BJ (cell line): ENCODE measurements at regions of chr10 and their contacts with region 1.

Region 1: GRCh38 chr10:23994479-23995046 is 214.4 kb upstream of the KIAA1217 start:
- DNase-seq: no peak
- H3K4me3 ChIP-seq: no peak overlapping the region
- H3K27me3 ChIP-seq: no peaks in the 10 kb centered on the region; the same call in 1 of the 2 replicates
- CTCF ChIP-seq: peak; percentile 85

Region 2: GRCh38 chr10:23965880-23966279 is 28.7 kb before region 1 on chr10:
- CTCF ChIA-PET with region 1: no interaction called
- POLR2A ChIA-PET with region 1: no interaction called
- DNase-seq: no peak
- H3K4me3 ChIP-seq: no peak overlapping the region
- H3K27me3 ChIP-seq: no peaks in the 10 kb centered on the region
- CTCF ChIP-seq: no peak

Region 3: DNA sequence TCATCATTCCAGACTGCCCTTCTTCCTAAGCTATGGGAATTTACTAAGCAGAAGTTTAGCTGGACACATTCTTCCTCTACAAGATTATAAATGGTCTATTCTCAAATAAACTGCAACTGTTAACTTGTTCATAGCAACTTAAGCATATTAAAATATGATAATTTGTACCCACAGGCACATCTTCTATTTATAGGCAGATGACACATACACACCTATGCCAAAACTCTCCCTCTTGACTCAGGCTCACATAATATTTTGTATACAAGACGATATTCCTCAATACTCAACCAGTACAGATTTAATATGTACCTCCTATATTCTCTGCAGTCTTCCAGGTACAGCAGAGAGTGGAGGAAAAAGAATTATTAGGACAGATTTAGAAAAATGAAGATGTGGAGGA is 18.3 kb before region 1 on chr10:
- CTCF ChIA-PET with region 1: interaction called, 15 read pairs
- POLR2A ChIA-PET with region 1: no interaction called
- DNase-seq: no peak
- H3K4me3 ChIP-seq: no peak overlapping the region
- H3K27me3 ChIP-seq: no peaks in the 10 kb centered on the region
- CTCF ChIP-seq: no peak

Region 4: GRCh38 chr10:24008164-24009091 is 13.9 kb after region 1 on chr10:
- CTCF ChIA-PET with region 1: interaction called, 15 read pairs
- POLR2A ChIA-PET with region 1: no interaction called
- DNase-seq: peak; percentile 7
- H3K4me3 ChIP-seq: no peak overlapping the region
- H3K27me3 ChIP-seq: no peaks in the 10 kb centered on the region
- CTCF ChIP-seq: no peak

Region 5: GRCh38 chr10:24360282-24361127 is 365.9 kb after region 1 on chr10:
- CTCF ChIA-PET with region 1: interaction called, 25 read pairs
- POLR2A ChIA-PET with region 1: no interaction called
- DNase-seq: no peak
- H3K4me3 ChIP-seq: no peak overlapping the region
- H3K27me3 ChIP-seq: no peaks in the 10 kb centered on the region
- CTCF ChIP-seq: peak; percentile 83

Region 6: GRCh38 chr10:24513155-24513554 is 518.6 kb after region 1 on chr10:
- CTCF ChIA-PET with region 1: interaction called, 82 read pairs
- POLR2A ChIA-PET with region 1: no interaction called
- DNase-seq: no peak
- H3K4me3 ChIP-seq: no peak overlapping the region
- H3K27me3 ChIP-seq: no peaks in the 10 kb centered on the region
- CTCF ChIP-seq: peak; percentile 56

Region 7: DNA sequence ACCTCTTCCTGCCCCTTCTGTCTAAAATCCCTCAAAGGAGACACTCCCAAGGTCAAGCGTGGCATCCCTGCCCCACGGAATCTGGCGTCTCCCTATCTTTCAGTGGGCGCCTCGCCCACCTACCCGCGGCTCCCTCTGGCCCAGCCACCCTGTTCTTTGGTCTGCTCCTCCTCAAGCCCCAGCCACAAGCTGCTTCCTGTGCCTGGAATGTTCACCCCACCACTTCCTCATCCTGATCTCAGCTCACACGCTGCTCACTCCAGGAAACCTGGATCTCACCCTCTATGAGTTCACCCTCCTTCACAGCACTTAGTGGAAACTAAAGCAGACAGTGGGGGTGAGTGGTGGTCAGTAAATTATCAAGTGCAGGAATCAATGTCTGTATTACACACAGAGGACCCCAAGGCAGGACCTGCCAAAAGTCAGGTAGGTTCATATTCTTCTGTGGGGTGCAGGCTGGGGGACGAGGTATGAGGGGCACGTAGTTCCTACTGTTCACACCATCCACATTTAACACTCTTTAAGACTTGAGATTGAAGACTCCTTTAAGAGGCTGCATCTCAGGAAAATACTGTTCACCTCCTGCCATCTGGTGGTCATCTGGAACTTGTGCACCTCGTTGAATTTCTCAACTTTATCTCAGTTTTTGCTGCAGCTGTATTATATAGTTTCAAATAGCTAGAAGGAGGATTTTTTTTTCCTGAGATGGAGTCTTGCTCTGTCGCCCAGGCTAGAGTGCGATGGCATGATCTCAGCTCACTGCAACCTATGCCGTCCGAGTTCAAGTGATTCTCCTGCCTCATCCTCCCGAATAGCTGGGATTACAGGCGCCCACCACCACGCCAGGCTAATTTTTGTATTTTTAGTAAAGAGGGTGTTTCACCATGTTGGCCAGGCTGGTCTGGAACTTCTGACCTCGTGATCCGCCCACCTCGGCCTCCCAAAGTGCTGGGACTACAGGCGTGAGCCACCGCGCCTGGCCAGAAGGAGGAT is 562.5 kb after region 1 on chr10:
- CTCF ChIA-PET with region 1: interaction called, 28 read pairs
- POLR2A ChIA-PET with region 1: no interaction called
- DNase-seq: no peak
- H3K4me3 ChIP-seq: no peak overlapping the region
- H3K27me3 ChIP-seq: 0 out of 2 replicates have a peak, but pooled peaks cover 1% of the 10 kb centered on the region
- CTCF ChIP-seq: peak; percentile 69